Common myeloid progenitor, CD34-positive (primary cell): ENCODE measurements at regions of chr12 and their contacts with region 1.

Region 1: GRCh38 chr12:11798856-11799501 is 149.5 kb downstream of the ETV6 start:
- DNase-seq: peak; percentile 87 to 93 (median 91)
- H3K4me3 ChIP-seq: peak overlapping the region in 3 of 7 experiments; percentile 2 to 51 (median 23)
- H3K27ac ChIP-seq: peak overlapping the region; percentile 96 to 97
- H3K4me1 ChIP-seq: peaks cover 61 to 100% (median 89%) of the 10 kb centered on the region in 4 experiments
- H3K27me3 ChIP-seq: no peaks in the 10 kb centered on the region

Region 2: DNA sequence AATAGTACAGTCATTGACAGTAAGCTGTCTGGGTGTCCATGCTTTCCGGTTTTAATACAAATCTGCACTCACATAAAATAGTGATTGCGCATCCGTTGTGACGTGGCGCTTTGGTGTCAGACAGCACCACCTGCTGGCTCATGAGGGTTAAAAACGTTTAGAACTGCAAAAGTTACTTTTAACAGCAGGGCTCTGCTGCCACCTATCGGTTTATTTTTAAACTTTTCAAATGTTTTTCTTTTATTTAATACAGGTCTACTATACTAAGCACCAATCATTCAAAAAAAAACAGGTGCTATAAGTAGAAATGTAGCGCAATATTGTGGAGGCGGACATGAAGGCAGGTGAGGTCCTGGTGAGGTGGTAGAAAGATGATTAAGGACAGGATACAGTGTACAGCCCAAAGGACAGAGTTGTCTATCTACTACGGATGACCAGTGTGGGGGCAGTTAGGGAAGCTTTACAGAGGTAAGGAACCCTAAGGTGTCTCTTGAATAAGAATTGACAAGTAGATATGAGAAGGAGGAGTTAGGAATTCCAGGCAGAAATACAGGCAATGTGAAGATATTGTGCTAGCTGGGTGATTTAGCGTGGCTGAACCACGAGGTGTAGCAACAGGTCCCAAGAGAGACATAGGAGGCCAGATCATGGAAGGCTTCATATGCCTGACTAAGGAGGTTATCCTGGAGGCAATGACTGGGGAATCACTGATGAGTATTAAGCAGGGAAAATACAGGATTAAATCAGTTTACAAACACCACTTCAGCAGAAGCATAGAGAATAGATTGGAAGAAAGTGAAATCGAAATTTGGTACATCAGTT is 312.1 kb before region 1 on chr12:
- CTCF ChIA-PET with region 1: no interaction called
- POLR2A ChIA-PET with region 1: no interaction called
- DNase-seq: peak; percentile 87 to 95 (median 91)
- H3K4me3 ChIP-seq: no peak overlapping the region
- H3K27ac ChIP-seq: no peak overlapping the region
- H3K4me1 ChIP-seq: no peaks in the 10 kb centered on the region
- H3K27me3 ChIP-seq: no peaks in the 10 kb centered on the region

Region 3: GRCh38 chr12:11649703-11650521 is 149.1 kb before region 1 on chr12:
- CTCF ChIA-PET with region 1: no interaction called
- POLR2A ChIA-PET with region 1: interaction called, 11 read pairs
- DNase-seq: peak in 2 of 3 donors; percentile 66 to 75
- H3K4me3 ChIP-seq: peak overlapping the region; percentile 76 to 100 (median 89)
- H3K27ac ChIP-seq: peak overlapping the region; percentile 93 to 94
- H3K4me1 ChIP-seq: peaks cover 20 to 43% (median 31%) of the 10 kb centered on the region in 4 experiments
- H3K27me3 ChIP-seq: no peaks in the 10 kb centered on the region

Region 4: GRCh38 chr12:11746024-11746771 is 52.8 kb before region 1 on chr12:
- CTCF ChIA-PET with region 1: interaction called, 5 read pairs
- POLR2A ChIA-PET with region 1: interaction called, 22 read pairs
- DNase-seq: peak; percentile 95 to 99 (median 97)
- H3K4me3 ChIP-seq: peak overlapping the region in 2 of 7 experiments; percentile 33 to 43
- H3K27ac ChIP-seq: peak overlapping the region; percentile 94 to 97
- H3K4me1 ChIP-seq: peaks cover 56 to 98% (median 91%) of the 10 kb centered on the region in 4 experiments
- H3K27me3 ChIP-seq: no peaks in the 10 kb centered on the region

Region 5: DNA sequence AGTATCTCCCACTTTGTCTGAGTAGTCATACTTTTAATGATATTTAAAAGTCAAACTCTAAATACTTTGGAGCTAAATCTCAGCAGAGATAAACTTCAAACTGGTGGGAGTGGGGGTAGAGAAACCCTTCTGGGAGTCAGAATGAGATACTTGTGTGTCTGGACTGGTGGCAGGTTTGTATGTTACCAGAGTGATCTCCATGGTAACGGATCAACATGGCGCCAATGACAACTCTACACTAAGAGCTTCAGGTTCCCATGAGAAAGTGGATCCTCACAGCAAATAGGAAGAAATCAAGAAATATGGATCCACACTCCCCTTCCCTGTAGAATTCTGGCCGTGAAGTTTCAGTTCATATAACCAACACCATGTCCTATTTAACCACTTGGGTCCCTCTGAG is 27.6 kb before region 1 on chr12:
- CTCF ChIA-PET with region 1: interaction called, 45 read pairs
- POLR2A ChIA-PET with region 1: interaction called, 10 read pairs
- DNase-seq: peak in 2 of 3 donors; percentile 74 to 77
- H3K4me3 ChIP-seq: no peak overlapping the region
- H3K27ac ChIP-seq: peak overlapping the region; percentile 59 to 81
- H3K4me1 ChIP-seq: peaks cover 46 to 95% (median 91%) of the 10 kb centered on the region in 4 experiments
- H3K27me3 ChIP-seq: no peaks in the 10 kb centered on the region

Region 6: DNA sequence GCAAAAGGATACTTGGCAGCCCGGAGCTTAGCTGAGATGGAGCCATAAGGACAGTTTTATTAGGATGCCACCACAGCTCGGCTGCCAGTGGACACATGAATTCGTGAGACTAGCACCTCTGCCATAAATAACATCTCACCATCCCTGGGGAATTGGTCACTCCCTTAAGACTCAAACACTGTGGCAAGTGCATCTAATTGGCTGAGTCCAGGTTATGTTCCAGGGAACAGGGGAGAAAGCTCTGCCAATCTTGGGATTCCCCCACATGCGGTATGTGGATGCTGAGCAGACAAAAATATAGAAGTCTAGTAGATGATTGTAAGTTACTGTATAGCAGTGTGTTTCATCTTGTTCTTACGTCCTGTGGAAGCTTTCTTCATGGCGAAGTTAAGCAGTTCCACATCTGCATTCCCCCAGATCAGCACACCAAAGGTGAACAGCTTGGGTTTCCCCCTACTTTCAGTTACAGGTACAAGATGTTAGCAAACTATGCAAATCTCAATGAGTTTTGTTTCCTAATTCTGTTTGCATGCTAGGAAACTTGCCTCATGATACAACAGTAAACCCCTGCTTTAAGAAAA is 18.4 kb before region 1 on chr12:
- CTCF ChIA-PET with region 1: interaction called, 45 read pairs
- POLR2A ChIA-PET with region 1: interaction called, 8 read pairs
- DNase-seq: no peak
- H3K4me3 ChIP-seq: no peak overlapping the region
- H3K27ac ChIP-seq: peak overlapping the region in 1 of 2 experiments; percentile 9
- H3K4me1 ChIP-seq: peaks cover 4 to 91% (median 57%) of the 10 kb centered on the region in 4 experiments
- H3K27me3 ChIP-seq: no peaks in the 10 kb centered on the region

Region 7: DNA sequence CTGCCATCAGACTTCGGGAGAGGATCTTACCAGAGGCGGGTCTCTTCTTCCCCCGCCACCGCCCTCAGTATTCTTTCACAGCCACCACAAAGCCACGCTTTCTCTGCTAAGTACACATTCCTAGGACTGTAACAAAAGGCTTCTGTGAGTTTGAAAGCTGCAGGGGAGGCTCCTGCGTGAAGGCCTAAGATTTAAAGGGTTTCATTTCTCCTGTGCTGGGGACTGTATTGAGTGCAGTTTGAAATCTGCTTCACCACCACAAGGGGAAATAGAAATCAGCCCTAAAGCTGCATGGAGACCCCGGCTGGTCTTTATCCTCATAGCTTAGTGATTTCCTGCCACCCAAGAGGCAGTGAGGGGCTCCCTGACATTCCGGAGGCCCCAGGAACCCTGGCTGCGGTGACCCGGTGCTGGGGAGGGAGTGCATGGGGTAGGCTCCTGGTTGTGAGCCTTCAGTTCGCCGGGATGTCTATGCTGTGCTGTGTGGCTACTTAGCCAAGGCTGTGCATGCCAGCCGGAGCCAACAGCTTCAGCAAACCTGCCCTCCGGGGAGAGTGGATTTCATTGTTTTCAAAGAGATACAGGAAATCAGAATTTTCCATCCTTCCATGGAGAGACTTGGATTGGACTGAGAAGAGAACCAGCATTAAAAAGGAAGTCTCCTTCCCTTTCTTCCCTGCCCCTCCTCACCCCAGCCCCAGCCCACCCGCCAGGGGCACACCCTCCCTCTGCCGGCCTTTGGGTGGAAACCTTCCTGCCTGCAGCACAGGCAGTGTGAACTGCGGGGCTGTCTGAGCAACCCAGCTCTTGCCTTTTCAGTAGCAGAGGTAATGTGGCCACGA is 13.8 kb after region 1 on chr12:
- CTCF ChIA-PET with region 1: interaction called, 70 read pairs
- POLR2A ChIA-PET with region 1: interaction called, 53 read pairs
- DNase-seq: peak; percentile 34 to 73 (median 69)
- H3K4me3 ChIP-seq: peak overlapping the region in 6 of 7 experiments; percentile 34 to 66 (median 60)
- H3K27ac ChIP-seq: peak overlapping the region; percentile 79 to 86
- H3K4me1 ChIP-seq: peaks cover 39 to 93% (median 79%) of the 10 kb centered on the region in 4 experiments
- H3K27me3 ChIP-seq: no peaks in the 10 kb centered on the region